ENCODE measurements at regions of chr15 and their contacts with region 1.

Region 1: GRCh38 chr15:68229386-68230156 is at the start of gene CLN6:
- DNase-seq: peak; percentile 87
- ATAC-seq: peak; percentile 91
- H3K4me3 Mint-ChIP-seq: peak within 1 kb of the TSS; percentile 85
- H3K27ac Mint-ChIP-seq: peak within 1 kb of the TSS; percentile 87
- H3K4me1 Mint-ChIP-seq: peaks cover 36% of the 10 kb centered on the region
- H3K27me3 Mint-ChIP-seq: no peaks in the 10 kb centered on the region
- CTCF ChIP-seq: no peak
- total RNA-seq, gene CLN6: 43.1 to 47.2 TPM

Region 2: GRCh38 chr15:68053701-68054627 is 175.6 kb before region 1 on chr15 and contains the start of gene PIAS1:
- CTCF ChIA-PET with region 1: no interaction called
- POLR2A ChIA-PET with region 1: interaction called, 12 read pairs
- intact Hi-C with region 1: no loop called
- DNase-seq: peak; percentile 96
- ATAC-seq: peak; percentile 92
- H3K4me3 Mint-ChIP-seq: peak within 1 kb of the TSS; percentile 84
- H3K27ac Mint-ChIP-seq: peak within 1 kb of the TSS; percentile 94
- H3K4me1 Mint-ChIP-seq: peaks cover 41% of the 10 kb centered on the region
- H3K27me3 Mint-ChIP-seq: peaks cover 7% of the 10 kb centered on the region
- CTCF ChIP-seq: no peak
- total RNA-seq, gene PIAS1: 26.0 to 29.8 TPM

Region 3: DNA sequence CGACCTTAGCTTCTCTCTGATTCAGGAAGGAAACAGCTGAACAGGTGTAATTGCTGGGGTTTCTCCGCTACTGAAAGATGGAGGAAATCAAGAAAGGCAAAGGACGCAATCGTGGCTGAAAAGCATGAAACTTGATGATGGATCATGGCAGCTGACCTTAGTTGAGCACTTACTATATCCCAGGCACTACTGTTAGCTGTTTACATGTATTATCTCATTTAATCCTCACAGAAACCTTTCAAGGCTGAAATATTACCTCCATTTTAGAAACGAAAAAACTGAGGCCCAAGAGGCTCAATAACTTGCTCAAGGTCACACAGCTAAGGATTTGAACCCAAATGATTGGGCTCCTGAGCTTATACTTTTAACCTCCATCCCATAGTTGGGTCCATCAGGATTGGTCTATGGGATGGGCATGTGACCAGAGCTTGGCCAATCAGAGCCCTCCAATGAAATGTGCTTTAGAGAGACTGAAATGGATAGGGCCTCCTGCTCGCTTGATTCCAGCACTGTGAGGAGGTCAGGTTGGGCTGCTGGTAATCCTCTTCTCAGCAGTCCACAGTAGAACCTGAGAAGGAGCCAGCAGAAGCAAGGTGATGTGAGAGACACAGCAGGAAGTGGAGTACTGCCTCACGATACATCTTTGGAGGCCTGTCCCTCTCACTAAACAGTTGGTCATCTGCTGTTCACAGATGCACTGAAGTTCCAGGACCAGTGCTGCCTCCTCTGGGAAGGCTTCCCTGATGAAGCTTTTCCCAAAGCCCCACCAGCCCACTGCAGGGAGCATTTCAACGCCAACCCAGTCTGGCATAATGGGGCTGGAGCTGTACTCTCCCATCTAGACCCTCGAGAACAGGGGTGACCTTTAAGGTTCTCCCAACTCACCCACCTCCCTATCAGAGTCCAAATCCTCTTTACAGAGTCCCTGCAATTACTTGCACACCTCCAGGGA is 10.4 kb before region 1 on chr15:
- CTCF ChIA-PET with region 1: no interaction called
- POLR2A ChIA-PET with region 1: interaction called, 10 read pairs
- intact Hi-C with region 1: no loop called
- DNase-seq: no peak
- ATAC-seq: no peak
- H3K4me3 Mint-ChIP-seq: no peak overlapping the region
- H3K27ac Mint-ChIP-seq: no peak overlapping the region
- H3K4me1 Mint-ChIP-seq: peaks cover 2% of the 10 kb centered on the region
- H3K27me3 Mint-ChIP-seq: no peaks in the 10 kb centered on the region
- CTCF ChIP-seq: no peak

Measured in activated CD8-positive, alpha-beta T cell treated with anti-CD3 and anti-CD28 coated beads for 36 hours (primary cell).